ENCODE measurements at regions of chr4 and their contacts with region 1.

Region 1: DNA sequence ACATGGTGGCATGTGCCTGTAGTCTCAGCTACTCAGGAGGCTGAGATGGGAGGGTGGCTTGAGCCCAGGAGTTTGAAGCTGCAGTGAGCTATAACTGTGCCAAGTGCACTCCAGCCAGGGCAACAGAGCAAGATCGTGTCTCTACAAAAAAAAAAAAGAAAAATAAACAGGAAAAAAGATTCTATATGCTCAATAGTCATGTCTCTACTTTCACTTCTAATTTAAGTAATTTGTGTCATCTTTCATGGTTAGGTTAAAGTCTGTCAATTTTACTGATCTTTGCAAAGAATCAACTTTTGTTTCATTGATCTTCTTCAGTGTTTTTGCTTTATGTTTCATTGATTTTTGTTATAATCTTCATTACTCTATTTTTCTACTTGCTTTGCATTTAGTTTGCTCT is 106.2 kb upstream of the MAB21L2 start:
- DNase-seq: no peak

Region 2: GRCh38 chr4:150462723-150463122 is 13.0 kb before region 1 on chr4:
- intact Hi-C with region 1: no loop called
- DNase-seq: no peak

Region 3: GRCh38 chr4:150546286-150546685 is 70.5 kb after region 1 on chr4:
- intact Hi-C with region 1: loop called in 1 of 2 experiments (anchors 2 kb)
- DNase-seq: no peak

Region 4: GRCh38 chr4:150598909-150599308 is 123.1 kb after region 1 on chr4:
- intact Hi-C with region 1: no loop called
- DNase-seq: no peak

Measured in posterior vena cava (tissue), 2 donors.